Prostate gland (tissue), 2 donors: ENCODE measurements at regions of chr5 and their contacts with region 1.

Region 1: DNA sequence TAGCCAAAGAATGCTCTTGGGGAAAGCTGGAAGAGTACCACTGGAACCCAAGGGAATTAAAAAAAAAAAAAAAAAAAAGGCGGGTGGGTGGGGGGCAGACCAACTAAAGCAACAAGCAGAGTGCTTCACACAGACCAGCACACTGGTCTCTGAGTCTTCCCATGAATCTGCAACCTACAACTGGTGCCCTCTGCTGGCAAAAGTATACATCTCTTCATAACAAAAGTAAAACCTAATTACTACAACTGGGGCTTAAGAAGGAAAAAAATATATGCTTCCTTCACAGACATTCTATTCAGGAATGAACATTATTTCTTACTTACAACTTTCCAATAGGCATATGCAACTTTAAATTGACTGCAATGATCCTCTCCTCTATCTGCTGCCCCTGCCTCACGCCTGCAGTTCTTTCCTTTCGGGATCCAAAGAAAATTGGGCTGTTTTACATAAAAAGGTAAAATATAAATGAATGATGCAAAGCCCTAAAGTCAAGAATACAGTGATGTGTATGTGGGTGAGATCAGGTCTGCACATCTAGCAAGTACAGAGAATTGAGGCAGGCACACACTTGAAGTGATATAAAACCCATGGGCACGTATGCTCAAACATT is 7.2 kb upstream of the KLHL3 start:
- DNase-seq: peak; percentile 52
- H3K4me3 ChIP-seq: no peak overlapping the region
- H3K27ac ChIP-seq: no peak overlapping the region
- H3K4me1 ChIP-seq: no peaks in the 10 kb centered on the region
- H3K27me3 ChIP-seq: no peaks in the 10 kb centered on the region
- CTCF ChIP-seq: peak in 3 of 4 experiments; percentile 30 to 58 (median 57)
- POLR2A ChIP-seq: no peak

Region 2: DNA sequence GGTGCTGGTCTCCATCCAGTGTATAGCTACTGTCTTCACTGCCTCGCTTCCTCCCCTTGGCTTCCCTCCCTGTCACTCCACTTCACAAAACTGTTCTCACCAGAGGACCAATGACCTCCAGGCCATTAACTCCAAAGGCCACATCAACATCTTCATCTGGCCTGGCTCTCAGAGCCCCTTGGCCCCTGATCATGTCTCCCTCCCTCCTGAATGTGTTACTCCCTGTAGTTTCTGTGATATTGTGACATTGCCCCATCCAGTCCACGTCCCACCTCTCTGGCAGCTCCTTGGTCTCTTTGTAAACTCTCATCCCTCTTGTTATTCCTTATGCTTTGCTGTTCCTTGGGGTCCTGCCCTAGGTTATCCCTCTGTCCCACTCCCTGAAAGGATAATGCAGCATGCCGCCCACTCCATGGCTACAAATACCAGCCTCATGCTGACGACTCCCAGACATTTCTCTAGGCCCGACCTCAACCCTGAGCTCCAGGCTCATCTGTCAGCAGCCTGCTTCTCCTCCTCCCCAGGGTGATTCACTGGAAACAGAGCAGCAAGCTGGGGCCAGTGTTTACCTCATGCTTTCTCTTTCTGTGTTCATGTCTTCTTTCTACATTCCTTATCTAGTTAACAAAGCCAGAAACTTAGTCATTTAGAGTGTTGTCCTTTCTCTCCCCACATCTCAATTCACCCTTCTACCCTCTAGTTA is 556.2 kb before region 1 on chr5:
- intact Hi-C with region 1: no loop called
- DNase-seq: no peak
- H3K4me3 ChIP-seq: no peak overlapping the region
- H3K27ac ChIP-seq: no peak overlapping the region
- H3K4me1 ChIP-seq: no peaks in the 10 kb centered on the region
- H3K27me3 ChIP-seq: no peaks in the 10 kb centered on the region
- CTCF ChIP-seq: no peak
- POLR2A ChIP-seq: no peak

Region 3: DNA sequence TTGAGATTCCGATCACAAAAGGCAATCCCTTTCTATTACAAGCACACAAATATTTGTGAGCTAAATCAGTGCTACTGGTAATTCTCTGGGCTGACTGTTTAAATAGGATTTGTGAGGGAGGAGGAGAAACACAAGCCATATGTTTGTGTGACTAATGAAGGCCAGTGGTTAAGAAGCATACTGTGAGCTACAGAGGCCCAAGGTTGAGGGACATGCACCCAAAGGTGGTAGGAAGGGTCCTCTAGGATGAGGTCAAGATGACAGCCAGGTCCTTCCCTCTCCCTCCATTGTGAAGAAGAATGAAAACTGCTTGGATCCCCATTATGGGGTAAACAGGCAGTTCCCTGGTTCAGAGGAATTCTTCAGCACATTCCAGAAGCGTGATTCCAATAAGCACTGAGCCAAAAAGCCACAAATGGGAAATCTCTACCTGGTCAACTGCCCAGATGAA is 327.9 kb before region 1 on chr5:
- intact Hi-C with region 1: no loop called
- DNase-seq: no peak
- H3K4me3 ChIP-seq: no peak overlapping the region
- H3K27ac ChIP-seq: no peak overlapping the region
- H3K4me1 ChIP-seq: no peaks in the 10 kb centered on the region
- H3K27me3 ChIP-seq: no peaks in the 10 kb centered on the region
- CTCF ChIP-seq: no peak
- POLR2A ChIP-seq: no peak

Region 4: DNA sequence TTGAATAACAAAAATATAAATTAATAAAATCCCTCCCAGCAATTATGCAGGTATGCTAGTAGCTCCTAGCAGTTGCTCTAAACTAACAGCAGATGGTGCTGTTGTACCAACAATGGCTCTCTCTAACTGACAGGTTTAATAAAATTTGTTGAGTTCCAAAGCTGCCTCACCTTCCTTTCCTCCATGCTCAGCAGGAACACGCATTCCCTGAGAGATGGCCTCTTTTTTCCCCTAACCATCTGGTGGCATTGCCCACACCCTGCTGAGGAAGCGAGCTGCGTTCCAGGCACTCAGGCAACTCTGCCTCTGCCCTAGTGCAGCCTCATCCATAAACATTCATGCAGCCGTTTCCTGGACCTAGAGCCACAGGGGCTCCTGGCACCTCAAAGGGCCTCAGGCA is 113.5 kb before region 1 on chr5:
- intact Hi-C with region 1: loop called (anchors 5 kb)
- DNase-seq: no peak
- H3K4me3 ChIP-seq: no peak overlapping the region
- H3K27ac ChIP-seq: no peak overlapping the region
- H3K4me1 ChIP-seq: peaks cover 4% of the 10 kb centered on the region
- H3K27me3 ChIP-seq: no peaks in the 10 kb centered on the region
- CTCF ChIP-seq: peak; percentile 65 to 93 (median 90)
- POLR2A ChIP-seq: no peak

Region 5: DNA sequence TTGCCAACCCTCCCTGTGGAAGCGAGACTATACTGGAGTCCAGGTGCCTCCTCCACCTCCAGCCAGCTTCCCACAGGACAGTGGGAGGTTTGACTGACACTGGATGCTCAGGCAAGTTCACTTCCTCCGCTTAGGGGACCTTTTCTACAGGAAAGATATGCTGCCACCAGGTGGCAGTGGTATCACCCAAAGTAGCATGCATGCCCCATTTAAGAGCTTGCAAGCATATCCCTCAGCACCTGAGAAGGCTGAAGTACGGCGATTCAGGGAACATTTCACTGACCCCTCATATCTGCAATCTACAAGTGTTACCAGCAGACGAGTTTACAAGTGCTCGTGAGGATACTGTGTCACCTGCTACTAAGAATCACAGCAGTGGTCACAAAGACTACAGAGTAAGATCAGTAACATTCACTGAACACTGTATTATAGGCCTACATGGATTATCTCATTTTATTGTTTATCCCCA is 82.8 kb before region 1 on chr5:
- intact Hi-C with region 1: loop called (anchors 2 kb)
- DNase-seq: peak; percentile 63
- H3K4me3 ChIP-seq: no peak overlapping the region
- H3K27ac ChIP-seq: no peak overlapping the region
- H3K4me1 ChIP-seq: no peaks in the 10 kb centered on the region
- H3K27me3 ChIP-seq: no peaks in the 10 kb centered on the region
- CTCF ChIP-seq: peak; percentile 22 to 77 (median 70)
- POLR2A ChIP-seq: no peak

Region 6: DNA sequence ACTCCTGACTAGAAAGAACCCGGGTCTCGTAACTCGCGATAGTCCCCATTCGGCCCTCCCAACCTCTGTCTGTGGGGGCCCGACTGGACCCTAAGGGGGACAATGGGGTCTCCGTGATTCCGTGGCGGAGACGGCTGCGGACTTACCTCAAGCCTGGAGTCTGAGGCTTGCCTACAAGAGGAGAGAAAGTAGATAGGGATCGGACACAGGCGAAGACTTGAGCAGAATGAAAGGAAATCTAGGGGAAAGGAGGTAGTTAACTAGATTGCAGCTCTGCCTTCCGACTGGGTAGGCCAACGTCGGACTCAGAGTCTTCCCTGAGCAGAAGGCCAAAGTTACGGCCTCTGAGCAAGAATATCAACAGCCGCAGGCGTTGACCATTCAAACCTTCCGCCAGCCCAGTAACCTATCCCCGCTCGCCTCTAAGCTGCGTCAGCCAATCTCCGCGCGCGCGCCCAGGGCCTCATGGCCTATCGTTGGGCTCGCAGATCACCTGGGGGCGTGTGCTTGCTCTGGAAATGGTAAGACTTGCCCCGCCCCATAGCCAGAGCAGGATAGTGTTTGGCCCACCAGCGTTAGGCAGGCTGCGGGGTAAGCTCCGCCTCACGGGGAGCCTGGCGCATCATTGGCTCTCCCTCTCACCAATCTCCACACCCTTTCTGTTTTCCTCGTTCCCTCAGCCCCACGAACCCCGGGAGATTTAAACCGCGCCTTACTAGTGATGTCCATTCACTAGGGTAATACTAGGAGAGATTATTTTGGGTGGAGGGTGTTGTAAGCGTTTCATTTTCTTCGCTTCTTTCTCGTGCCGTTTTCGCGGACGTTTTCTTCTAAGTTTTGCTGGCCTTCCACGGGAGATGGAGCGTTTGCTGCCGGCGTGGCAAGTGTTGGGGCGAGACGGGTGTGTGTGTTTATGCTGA is 588.6 kb after region 1 on chr5 and contains the start of gene CDC25C:
- intact Hi-C with region 1: no loop called
- DNase-seq: peak; percentile 98
- H3K4me3 ChIP-seq: peak within 1 kb of the TSS; percentile 19 to 39
- H3K27ac ChIP-seq: peak within 1 kb of the TSS; percentile 14 to 56
- H3K4me1 ChIP-seq: no peaks in the 10 kb centered on the region
- H3K27me3 ChIP-seq: no peaks in the 10 kb centered on the region
- CTCF ChIP-seq: peak in 1 of 4 experiments; percentile 3
- POLR2A ChIP-seq: peak; percentile 7
- total RNA-seq, gene CDC25C: 0.14 to 3.2 TPM